ENCODE measurements at regions of chr14 and their contacts with region 1.

Region 1: GRCh38 chr14:99884834-99885648 is 91.8 kb downstream of the EML1 start:
- DNase-seq: peak; percentile 33
- ATAC-seq: peak; percentile 77
- H3K4me3 Mint-ChIP-seq: no peak overlapping the region
- H3K27ac Mint-ChIP-seq: no peak overlapping the region
- H3K4me1 Mint-ChIP-seq: no peaks in the 10 kb centered on the region
- H3K27me3 Mint-ChIP-seq: peaks cover 2% of the 10 kb centered on the region
- CTCF ChIP-seq: peak; percentile 88

Region 2: GRCh38 chr14:99524804-99525698 is 360.0 kb before region 1 on chr14:
- CTCF ChIA-PET with region 1: no interaction called
- POLR2A ChIA-PET with region 1: no interaction called
- intact Hi-C with region 1: loop called (anchors 10 kb)
- DNase-seq: peak; percentile 17
- ATAC-seq: peak; percentile 67
- H3K4me3 Mint-ChIP-seq: no peak overlapping the region
- H3K27ac Mint-ChIP-seq: peak overlapping the region; percentile 52
- H3K4me1 Mint-ChIP-seq: peaks cover 9% of the 10 kb centered on the region
- H3K27me3 Mint-ChIP-seq: no peaks in the 10 kb centered on the region
- CTCF ChIP-seq: no peak

Region 3: GRCh38 chr14:99595034-99595433 is 290.0 kb before region 1 on chr14:
- CTCF ChIA-PET with region 1: no interaction called
- POLR2A ChIA-PET with region 1: no interaction called
- intact Hi-C with region 1: no loop called
- DNase-seq: peak; percentile 67
- ATAC-seq: peak; percentile 94
- H3K4me3 Mint-ChIP-seq: peak overlapping the region; percentile 49
- H3K27ac Mint-ChIP-seq: peak overlapping the region; percentile 57
- H3K4me1 Mint-ChIP-seq: peaks cover 13% of the 10 kb centered on the region
- H3K27me3 Mint-ChIP-seq: no peaks in the 10 kb centered on the region
- CTCF ChIP-seq: no peak

Region 4: GRCh38 chr14:99683619-99684355 is 201.3 kb before region 1 on chr14 and contains the start of gene CYP46A1:
- CTCF ChIA-PET with region 1: interaction called, 11 read pairs
- POLR2A ChIA-PET with region 1: no interaction called
- intact Hi-C with region 1: no loop called
- DNase-seq: peak; percentile 100
- ATAC-seq: peak; percentile 96
- H3K4me3 Mint-ChIP-seq: peak within 1 kb of the TSS; percentile 85
- H3K27ac Mint-ChIP-seq: peak within 1 kb of the TSS; percentile 84
- H3K4me1 Mint-ChIP-seq: peaks cover 11% of the 10 kb centered on the region
- H3K27me3 Mint-ChIP-seq: peaks cover 17% of the 10 kb centered on the region
- CTCF ChIP-seq: no peak
- total RNA-seq, gene CYP46A1: 0.16 to 0.20 TPM

Region 5: DNA sequence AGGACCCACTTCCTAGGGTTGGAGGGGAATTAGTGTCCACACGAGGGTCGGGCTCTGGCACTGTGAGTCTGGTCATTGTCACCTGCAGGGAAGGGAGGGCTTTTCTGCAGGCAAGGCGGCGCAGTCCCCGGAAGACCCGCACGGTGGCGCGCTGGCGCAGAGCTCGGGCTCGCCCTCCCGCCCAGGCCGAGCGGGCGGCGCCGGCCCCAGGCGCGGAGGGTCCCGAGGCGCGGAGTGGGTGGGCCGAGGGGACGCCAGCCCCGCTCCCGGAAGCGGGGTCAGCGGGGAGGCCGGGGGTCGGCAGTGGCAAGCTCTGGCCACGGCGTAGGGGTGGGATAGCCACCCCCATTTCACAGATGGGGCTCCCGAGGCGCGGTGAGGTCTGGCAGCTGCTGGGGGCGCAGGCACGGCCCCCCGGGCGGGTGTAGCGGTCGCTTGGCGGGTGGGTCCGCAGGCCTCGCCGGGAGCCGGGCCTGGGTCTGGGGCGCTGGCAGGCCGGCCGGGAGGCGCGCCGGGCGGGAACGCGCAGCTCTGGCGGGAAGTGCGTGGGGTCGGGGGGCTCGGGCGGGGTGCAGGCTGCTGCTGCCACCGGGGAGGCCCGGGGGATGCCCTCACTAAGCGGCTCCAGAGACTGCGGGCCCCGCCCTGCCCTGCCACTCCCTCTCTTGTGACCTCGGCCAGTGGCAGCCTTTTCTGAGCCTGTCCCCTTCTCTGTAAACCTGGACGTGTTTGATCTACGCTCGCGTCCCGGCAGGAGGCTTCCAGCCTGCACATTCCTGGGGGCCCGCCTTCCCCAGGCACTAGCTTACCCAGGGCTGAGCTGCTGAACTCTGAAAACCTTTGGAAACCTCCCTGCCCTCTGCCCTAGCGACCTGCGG is 154.8 kb before region 1 on chr14:
- CTCF ChIA-PET with region 1: interaction called, 29 read pairs
- POLR2A ChIA-PET with region 1: no interaction called
- intact Hi-C with region 1: loop called (anchors 5 kb)
- DNase-seq: peak; percentile 79
- ATAC-seq: peak; percentile 96
- H3K4me3 Mint-ChIP-seq: no peak overlapping the region
- H3K27ac Mint-ChIP-seq: no peak overlapping the region
- H3K4me1 Mint-ChIP-seq: no peaks in the 10 kb centered on the region
- H3K27me3 Mint-ChIP-seq: peaks cover 25% of the 10 kb centered on the region
- CTCF ChIP-seq: peak; percentile 95

Region 6: GRCh38 chr14:99899578-99900178 is 14.6 kb after region 1 on chr14:
- CTCF ChIA-PET with region 1: interaction called, 22 read pairs
- POLR2A ChIA-PET with region 1: no interaction called
- intact Hi-C with region 1: no loop called
- DNase-seq: no peak
- ATAC-seq: no peak
- H3K4me3 Mint-ChIP-seq: no peak overlapping the region
- H3K27ac Mint-ChIP-seq: no peak overlapping the region
- H3K4me1 Mint-ChIP-seq: no peaks in the 10 kb centered on the region
- H3K27me3 Mint-ChIP-seq: peaks cover 1% of the 10 kb centered on the region
- CTCF ChIP-seq: peak; percentile 46

Region 7: GRCh38 chr14:99940064-99940463 is 55.0 kb after region 1 on chr14:
- CTCF ChIA-PET with region 1: no interaction called
- POLR2A ChIA-PET with region 1: no interaction called
- intact Hi-C with region 1: no loop called
- DNase-seq: no peak
- ATAC-seq: no peak
- H3K4me3 Mint-ChIP-seq: no peak overlapping the region
- H3K27ac Mint-ChIP-seq: no peak overlapping the region
- H3K4me1 Mint-ChIP-seq: no peaks in the 10 kb centered on the region
- H3K27me3 Mint-ChIP-seq: no peaks in the 10 kb centered on the region
- CTCF ChIP-seq: no peak

Measured in activated CD8-positive, alpha-beta T cell treated with anti-CD3 and anti-CD28 coated beads for 36 hours (primary cell).